Sigmoid colon (tissue), 7 donors: ENCODE measurements at regions of chr12 and their contacts with region 1.

Region 1: GRCh38 chr12:8697476-8698131 is at the start of gene RIMKLB:
- DNase-seq: peak; percentile 93
- H3K4me3 ChIP-seq: peak within 1 kb of the TSS; percentile 76 to 94 (median 87)
- H3K27ac ChIP-seq: peak within 1 kb of the TSS; percentile 95 to 98 (median 96)
- H3K4me1 ChIP-seq: peaks cover 3 to 59% (median 44%) of the 10 kb centered on the region in 4 donors
- H3K27me3 ChIP-seq: no peaks in the 10 kb centered on the region
- CTCF ChIP-seq: no peak
- EP300 ChIP-seq: peak in 1 of 4 donors; percentile 8
- POLR2A ChIP-seq: peak; percentile 50 to 67
- total RNA-seq, gene RIMKLB: 52.3 to 60.4 (median 57.6) TPM

Region 2: GRCh38 chr12:8038659-8039114 is 658.9 kb before region 1 on chr12:
- intact Hi-C with region 1: loop called (anchors 5 kb)
- DNase-seq: peak; percentile 87
- H3K4me3 ChIP-seq: peak overlapping the region in 3 of 4 donors; percentile 18 to 33 (median 23)
- H3K27ac ChIP-seq: peak overlapping the region; percentile 73 to 98 (median 96)
- H3K4me1 ChIP-seq: peaks cover 0 to 60% (median 59%) of the 10 kb centered on the region in 4 donors
- H3K27me3 ChIP-seq: no peaks in the 10 kb centered on the region
- CTCF ChIP-seq: no peak
- EP300 ChIP-seq: no peak
- POLR2A ChIP-seq: no peak

Region 3: GRCh38 chr12:8780389-8780788 is 82.8 kb after region 1 on chr12:
- intact Hi-C with region 1: loop called (anchors 5 kb)
- DNase-seq: no peak
- H3K4me3 ChIP-seq: no peak overlapping the region
- H3K27ac ChIP-seq: no peak overlapping the region
- H3K4me1 ChIP-seq: peaks cover 0 to 8% (median 3%) of the 10 kb centered on the region in 4 donors
- H3K27me3 ChIP-seq: no peaks in the 10 kb centered on the region
- CTCF ChIP-seq: peak in 2 of 4 experiments; percentile 15 to 22
- EP300 ChIP-seq: no peak
- POLR2A ChIP-seq: no peak

Region 4: DNA sequence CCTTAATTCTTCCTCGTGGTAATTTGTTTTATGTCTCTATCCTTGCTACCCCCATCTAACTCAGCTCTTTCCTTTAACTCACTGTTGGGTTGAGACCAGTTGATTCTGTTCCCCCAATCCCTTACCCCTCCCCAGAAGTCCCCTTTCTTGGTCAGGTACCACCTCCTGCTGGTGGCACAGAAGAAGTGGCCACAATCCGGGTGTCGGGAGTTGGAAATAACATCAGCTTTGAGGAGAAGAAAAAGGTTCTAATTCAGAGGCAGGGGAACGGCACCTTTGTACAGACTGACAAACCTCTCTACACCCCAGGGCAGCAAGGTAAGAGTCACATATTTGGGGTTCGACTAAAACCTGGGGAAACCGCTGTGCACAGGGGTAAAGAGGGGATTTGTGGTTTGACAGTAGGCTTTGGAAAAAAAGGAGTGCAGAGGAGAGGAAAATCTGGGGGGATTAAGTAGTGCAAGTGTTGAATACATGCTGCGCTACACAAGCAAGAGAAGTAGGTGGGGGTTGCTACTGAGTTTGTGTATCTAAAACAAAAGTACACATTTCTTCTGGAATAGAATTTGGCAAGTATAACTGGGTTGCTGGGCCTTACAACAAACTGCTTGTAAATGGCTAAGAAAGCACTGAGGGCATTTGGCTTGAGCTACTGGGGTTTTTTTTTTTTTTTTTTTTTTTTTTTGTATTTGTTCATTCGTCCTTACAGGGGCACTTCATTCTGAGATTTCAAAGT is 126.1 kb after region 1 on chr12:
- intact Hi-C with region 1: no loop called
- DNase-seq: no peak
- H3K4me3 ChIP-seq: no peak overlapping the region
- H3K27ac ChIP-seq: peak overlapping the region in 1 of 4 donors; percentile 4
- H3K4me1 ChIP-seq: peaks cover 0 to 12% (median 4%) of the 10 kb centered on the region in 4 donors
- H3K27me3 ChIP-seq: no peaks in the 10 kb centered on the region
- CTCF ChIP-seq: peak; percentile 51 to 83 (median 62)
- EP300 ChIP-seq: no peak
- POLR2A ChIP-seq: no peak